ENCODE measurements at regions of chr13 and their contacts with region 1.

Region 1: GRCh38 chr13:29707876-29708543 is 112.5 kb upstream of the SLC7A1 start:
- DNase-seq: peak; percentile 48
- H3K4me3 ChIP-seq: no peak overlapping the region
- H3K27ac ChIP-seq: no peak overlapping the region
- H3K4me1 ChIP-seq: no peaks in the 10 kb centered on the region
- H3K27me3 ChIP-seq: peaks cover 9% of the 10 kb centered on the region
- CTCF ChIP-seq: peak; percentile 38 to 62 (median 52)
- EP300 ChIP-seq: no peak
- POLR2A ChIP-seq: no peak

Region 2: GRCh38 chr13:29508130-29508875 is 199.7 kb before region 1 on chr13:
- in situ Hi-C with region 1: loop called (anchors 10 to 25 kb)
- intact Hi-C with region 1: no loop called
- DNase-seq: peak; percentile 88
- H3K4me3 ChIP-seq: no peak overlapping the region
- H3K27ac ChIP-seq: no peak overlapping the region
- H3K4me1 ChIP-seq: peaks cover 0 to 7% (median 4%) of the 10 kb centered on the region in 4 donors
- H3K27me3 ChIP-seq: peaks cover 7% of the 10 kb centered on the region
- CTCF ChIP-seq: peak; percentile 93 to 98 (median 97)
- EP300 ChIP-seq: no peak
- POLR2A ChIP-seq: no peak

Region 3: DNA sequence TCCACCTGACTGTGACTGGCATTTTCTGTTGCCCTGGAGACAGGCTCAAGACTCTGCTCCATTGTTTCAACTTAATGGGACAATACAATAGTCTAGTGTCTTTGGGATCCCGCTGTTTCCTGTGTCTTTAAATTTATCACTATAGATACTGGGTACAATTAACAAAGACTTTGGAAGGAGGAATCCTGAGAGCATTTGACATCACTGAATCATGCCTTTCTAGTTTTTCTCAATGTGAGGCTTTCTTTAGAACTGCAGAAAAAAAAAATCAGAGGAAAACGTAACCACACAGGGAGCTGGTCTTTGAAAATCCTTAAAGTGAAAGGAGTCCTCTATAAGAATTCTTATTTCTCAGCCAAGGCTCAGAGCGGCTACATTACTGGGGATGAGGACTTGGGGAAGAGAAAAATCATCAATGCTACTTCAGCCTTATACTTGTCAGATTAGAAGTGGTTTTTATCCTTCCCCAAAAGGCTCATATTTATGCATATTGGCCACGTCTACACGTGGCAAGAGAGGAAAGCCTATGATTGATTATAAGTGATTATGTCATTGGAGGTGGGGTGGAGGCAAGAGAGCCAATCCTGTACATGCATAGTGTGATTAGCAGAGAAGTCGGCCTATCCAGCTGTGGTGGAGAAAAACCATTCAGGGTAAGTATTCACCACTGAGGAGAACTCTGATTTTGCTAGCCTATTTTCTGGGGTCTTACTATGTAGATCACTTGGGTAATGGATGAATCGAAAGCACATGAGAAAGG is 176.8 kb after region 1 on chr13:
- in situ Hi-C with region 1: no loop called
- intact Hi-C with region 1: no loop called
- DNase-seq: no peak
- H3K4me3 ChIP-seq: no peak overlapping the region
- H3K27ac ChIP-seq: no peak overlapping the region
- H3K4me1 ChIP-seq: peaks cover 0 to 3% (median 0%) of the 10 kb centered on the region in 4 donors
- H3K27me3 ChIP-seq: no peaks in the 10 kb centered on the region
- CTCF ChIP-seq: no peak
- EP300 ChIP-seq: no peak
- POLR2A ChIP-seq: no peak

Measured in transverse colon (tissue), 4 donors.